CD8-positive, alpha-beta memory T cell (primary cell): ENCODE measurements at regions of chr1 and their contacts with region 1.

Region 1: DNA sequence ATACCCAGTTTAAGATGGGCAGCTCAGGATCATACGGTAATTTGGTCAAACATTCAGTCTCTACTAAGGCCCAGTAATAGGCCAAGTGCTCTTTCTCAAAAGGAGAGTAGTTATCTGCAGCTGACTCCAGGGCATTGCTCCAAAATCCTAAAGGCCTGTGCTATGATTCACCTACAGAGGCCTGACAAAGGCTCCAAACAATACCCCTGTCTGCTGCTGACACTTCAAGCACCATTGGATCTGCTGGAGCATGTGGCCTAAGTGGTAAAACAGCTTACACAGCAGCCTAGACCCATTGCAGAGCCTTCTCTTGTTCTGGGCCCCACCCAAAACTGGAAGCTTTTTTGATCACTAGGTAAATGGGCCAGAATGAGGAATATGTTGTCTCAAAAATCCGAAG is 22.8 kb downstream of the SLAMF7 start:
- DNase-seq: no peak
- H3K4me3 ChIP-seq: no peak overlapping the region
- H3K4me3 Mint-ChIP-seq: no peak overlapping the region
- H3K27ac ChIP-seq: no peak overlapping the region
- H3K27ac Mint-ChIP-seq: no peak overlapping the region
- H3K4me1 ChIP-seq: peaks cover 15% of the 10 kb centered on the region
- H3K4me1 Mint-ChIP-seq: peaks cover 37 to 48% (median 43%) of the 10 kb centered on the region in 3 donors
- H3K27me3 ChIP-seq: no peaks in the 10 kb centered on the region
- H3K27me3 Mint-ChIP-seq: no peaks in the 10 kb centered on the region

Region 2: DNA sequence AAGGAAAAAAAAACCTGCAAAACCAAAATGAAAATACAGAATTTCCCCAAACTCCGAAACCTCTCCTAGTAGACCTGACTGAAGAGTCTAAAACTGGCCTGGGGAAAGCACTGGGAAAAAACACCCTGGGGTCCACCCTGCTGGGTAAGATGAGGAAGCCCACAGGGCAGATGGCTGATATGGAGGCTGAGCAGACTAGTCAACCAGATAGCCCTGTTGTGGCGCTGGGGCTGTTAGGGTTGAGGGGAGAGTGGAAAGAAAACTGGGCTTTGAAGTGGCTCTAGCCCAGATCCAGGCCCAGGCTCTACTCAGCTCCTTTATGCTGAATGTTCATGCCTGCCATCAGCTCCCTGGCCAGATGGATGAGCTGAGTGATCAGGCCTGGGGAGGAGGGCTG is 108.3 kb before region 1 on chr1:
- CTCF ChIA-PET with region 1: no interaction called
- POLR2A ChIA-PET with region 1: interaction called, 10 read pairs
- DNase-seq: no peak
- H3K4me3 ChIP-seq: no peak overlapping the region
- H3K4me3 Mint-ChIP-seq: no peak overlapping the region
- H3K27ac ChIP-seq: no peak overlapping the region
- H3K27ac Mint-ChIP-seq: peak overlapping the region in 2 of 8 donors; percentile 12 to 94
- H3K4me1 ChIP-seq: peaks cover 54% of the 10 kb centered on the region
- H3K4me1 Mint-ChIP-seq: peaks cover 40 to 71% (median 53%) of the 10 kb centered on the region in 3 donors
- H3K27me3 ChIP-seq: no peaks in the 10 kb centered on the region
- H3K27me3 Mint-ChIP-seq: no peaks in the 10 kb centered on the region

Region 3: GRCh38 chr1:160806109-160806665 is 44.3 kb after region 1 on chr1:
- CTCF ChIA-PET with region 1: no interaction called
- POLR2A ChIA-PET with region 1: no interaction called
- DNase-seq: no peak
- H3K4me3 ChIP-seq: no peak overlapping the region
- H3K4me3 Mint-ChIP-seq: peak overlapping the region; percentile 17 to 73 (median 53)
- H3K27ac ChIP-seq: no peak overlapping the region
- H3K27ac Mint-ChIP-seq: peak overlapping the region in 7 of 8 donors; percentile 43 to 75 (median 66)
- H3K4me1 ChIP-seq: peaks cover 50% of the 10 kb centered on the region
- H3K4me1 Mint-ChIP-seq: peaks cover 74 to 92% (median 90%) of the 10 kb centered on the region in 3 donors
- H3K27me3 ChIP-seq: no peaks in the 10 kb centered on the region
- H3K27me3 Mint-ChIP-seq: no peaks in the 10 kb centered on the region